Activated CD8-positive, alpha-beta T cell treated with anti-CD3 and anti-CD28 coated beads for 36 hours (primary cell): ENCODE measurements at regions of chr1 and their contacts with region 1.

Region 1: DNA sequence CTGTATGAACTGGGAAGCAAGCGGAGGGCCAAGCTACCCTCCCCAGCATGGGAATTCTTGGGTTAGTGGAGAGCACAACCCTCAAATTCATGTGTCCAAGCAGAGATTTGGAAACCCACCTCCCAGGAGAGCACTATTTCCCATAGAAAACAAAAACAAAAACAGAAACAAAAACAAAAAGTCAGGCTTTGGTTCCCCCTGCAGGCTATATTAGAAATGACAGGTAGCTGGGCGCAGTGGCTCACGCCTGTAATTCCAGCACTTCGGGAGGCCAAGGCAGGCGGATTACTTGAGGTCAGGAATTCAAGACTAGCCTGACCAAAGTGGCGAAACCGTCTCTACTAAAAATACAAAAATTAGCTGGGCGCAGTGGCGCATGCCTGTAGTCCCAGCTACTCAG is 10.8 kb downstream of the MINDY1 start:
- DNase-seq: peak; percentile 29
- ATAC-seq: peak; percentile 36
- H3K4me3 Mint-ChIP-seq: no peak overlapping the region
- H3K27ac Mint-ChIP-seq: no peak overlapping the region
- H3K4me1 Mint-ChIP-seq: peaks cover 11% of the 10 kb centered on the region
- H3K27me3 Mint-ChIP-seq: no peaks in the 10 kb centered on the region
- CTCF ChIP-seq: peak; percentile 96

Region 2: GRCh38 chr1:150961799-150962198 is 34.1 kb before region 1 on chr1:
- CTCF ChIA-PET with region 1: interaction called, 10 read pairs
- POLR2A ChIA-PET with region 1: interaction called, 3 read pairs
- intact Hi-C with region 1: no loop called
- DNase-seq: no peak
- ATAC-seq: no peak
- H3K4me3 Mint-ChIP-seq: no peak overlapping the region
- H3K27ac Mint-ChIP-seq: peak overlapping the region; percentile 64
- H3K4me1 Mint-ChIP-seq: peaks cover 2% of the 10 kb centered on the region
- H3K27me3 Mint-ChIP-seq: no peaks in the 10 kb centered on the region
- CTCF ChIP-seq: no peak

Region 3: GRCh38 chr1:151008190-151008860 is 12.4 kb after region 1 on chr1 and contains the start of gene PRUNE1:
- CTCF ChIA-PET with region 1: interaction called, 78 read pairs
- POLR2A ChIA-PET with region 1: interaction called, 12 read pairs
- intact Hi-C with region 1: no loop called
- DNase-seq: peak; percentile 98
- ATAC-seq: peak; percentile 90
- H3K4me3 Mint-ChIP-seq: peak within 1 kb of the TSS; percentile 98
- H3K27ac Mint-ChIP-seq: peak within 1 kb of the TSS; percentile 98
- H3K4me1 Mint-ChIP-seq: peaks cover 72% of the 10 kb centered on the region
- H3K27me3 Mint-ChIP-seq: no peaks in the 10 kb centered on the region
- CTCF ChIP-seq: no peak
- total RNA-seq, gene PRUNE1: 12.4 to 15.7 TPM

Region 4: DNA sequence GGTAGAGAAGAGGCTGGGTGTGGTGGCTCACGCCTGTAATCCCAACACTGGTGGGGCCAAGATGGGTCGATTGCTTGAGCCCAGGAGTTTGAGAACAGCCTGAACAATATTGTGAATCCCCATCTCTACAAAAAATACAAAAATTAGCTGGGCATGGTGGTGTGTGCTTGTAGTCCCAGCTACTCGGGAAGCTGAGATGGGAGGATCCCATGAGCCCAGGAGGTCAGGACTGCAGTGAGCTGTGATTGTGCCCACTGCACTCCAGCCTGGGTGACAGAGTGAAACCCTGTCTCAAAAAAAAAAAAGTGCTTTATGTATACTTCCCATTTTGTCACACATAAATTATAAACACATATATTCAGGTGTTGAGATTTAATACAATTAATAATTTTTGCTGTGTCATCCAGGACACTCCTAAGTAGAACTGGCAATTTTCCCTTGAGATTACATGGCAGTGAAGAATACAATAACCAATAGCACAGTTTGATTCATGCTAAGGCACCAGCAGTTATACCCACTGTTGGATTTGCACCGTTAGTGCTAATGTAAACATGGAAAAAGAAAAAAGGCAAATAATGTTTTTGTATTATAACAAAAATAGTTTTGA is 90.2 kb after region 1 on chr1:
- CTCF ChIA-PET with region 1: no interaction called
- POLR2A ChIA-PET with region 1: no interaction called
- intact Hi-C with region 1: no loop called
- DNase-seq: no peak
- ATAC-seq: no peak
- H3K4me3 Mint-ChIP-seq: no peak overlapping the region
- H3K27ac Mint-ChIP-seq: no peak overlapping the region
- H3K4me1 Mint-ChIP-seq: no peaks in the 10 kb centered on the region
- H3K27me3 Mint-ChIP-seq: no peaks in the 10 kb centered on the region
- CTCF ChIP-seq: no peak

Region 5: GRCh38 chr1:151146412-151147140 is 150.7 kb after region 1 on chr1 and contains the start of gene SEMA6C:
- CTCF ChIA-PET with region 1: no interaction called
- POLR2A ChIA-PET with region 1: no interaction called
- intact Hi-C with region 1: no loop called
- DNase-seq: peak; percentile 89
- ATAC-seq: peak; percentile 99
- H3K4me3 Mint-ChIP-seq: peak within 1 kb of the TSS; percentile 70
- H3K27ac Mint-ChIP-seq: peak within 1 kb of the TSS; percentile 41
- H3K4me1 Mint-ChIP-seq: peaks cover 6% of the 10 kb centered on the region
- H3K27me3 Mint-ChIP-seq: peaks cover 3% of the 10 kb centered on the region
- CTCF ChIP-seq: no peak
- total RNA-seq, gene SEMA6C: 3.4 to 3.7 TPM

Region 6: DNA sequence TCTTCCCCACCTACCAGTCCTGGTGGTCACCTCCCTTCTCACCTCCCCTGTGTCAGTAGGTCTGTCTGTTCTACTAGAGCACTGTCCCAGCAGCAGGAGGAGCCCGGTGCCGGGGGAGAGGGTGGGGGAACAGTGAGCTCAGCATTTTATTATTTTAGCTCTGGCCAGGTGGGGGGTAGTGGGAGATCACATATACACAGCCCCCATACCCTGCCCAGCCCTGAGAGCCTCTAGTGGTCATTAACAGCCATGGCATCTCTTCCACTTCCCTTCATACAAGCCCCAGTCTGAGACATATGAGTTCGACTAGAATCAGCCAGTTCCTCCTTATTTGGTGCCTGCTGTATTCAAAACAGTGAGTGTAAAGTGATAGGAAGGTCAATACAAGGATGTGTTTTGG is 180.0 kb after region 1 on chr1 and contains the start of gene TMOD4:
- CTCF ChIA-PET with region 1: no interaction called
- POLR2A ChIA-PET with region 1: no interaction called
- intact Hi-C with region 1: no loop called
- DNase-seq: no peak
- ATAC-seq: peak; percentile 80
- H3K4me3 Mint-ChIP-seq: no peak within 1 kb of the TSS
- H3K27ac Mint-ChIP-seq: peak within 1 kb of the TSS; percentile 70
- H3K4me1 Mint-ChIP-seq: no peaks in the 10 kb centered on the region
- H3K27me3 Mint-ChIP-seq: no peaks in the 10 kb centered on the region
- CTCF ChIP-seq: peak; percentile 63
- total RNA-seq, gene TMOD4: 1.9 to 2.5 TPM